Heart left ventricle (tissue), 16 donors: ENCODE measurements at regions of chr12 and their contacts with region 1.

Region 1: DNA sequence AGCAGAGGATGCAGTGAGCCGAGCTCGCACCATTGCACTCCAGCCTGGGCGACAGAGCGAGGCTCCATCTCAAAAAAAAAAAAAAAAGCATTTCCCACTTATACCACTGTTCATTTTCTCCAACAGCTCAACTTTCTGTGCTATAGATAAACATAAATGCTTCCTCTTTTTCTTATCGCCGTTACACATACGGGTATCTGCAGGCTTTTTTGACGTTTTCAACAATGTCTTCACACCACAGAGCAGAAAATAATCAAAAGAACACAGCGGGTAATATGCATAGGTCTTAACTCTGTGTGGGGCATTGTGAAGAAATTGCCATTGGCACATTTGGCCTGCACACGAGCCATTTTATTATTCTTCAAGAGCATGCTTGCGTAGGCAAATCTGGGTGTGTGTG is 86.4 kb downstream of the CAPZA3 start:
- DNase-seq: no peak
- ATAC-seq: no peak
- H3K4me3 ChIP-seq: no peak overlapping the region
- H3K27ac ChIP-seq: no peak overlapping the region
- H3K4me1 ChIP-seq: no peaks in the 10 kb centered on the region
- H3K27me3 ChIP-seq: no peaks in the 10 kb centered on the region
- CTCF ChIP-seq: no peak
- POLR2A ChIP-seq: no peak

Region 2: DNA sequence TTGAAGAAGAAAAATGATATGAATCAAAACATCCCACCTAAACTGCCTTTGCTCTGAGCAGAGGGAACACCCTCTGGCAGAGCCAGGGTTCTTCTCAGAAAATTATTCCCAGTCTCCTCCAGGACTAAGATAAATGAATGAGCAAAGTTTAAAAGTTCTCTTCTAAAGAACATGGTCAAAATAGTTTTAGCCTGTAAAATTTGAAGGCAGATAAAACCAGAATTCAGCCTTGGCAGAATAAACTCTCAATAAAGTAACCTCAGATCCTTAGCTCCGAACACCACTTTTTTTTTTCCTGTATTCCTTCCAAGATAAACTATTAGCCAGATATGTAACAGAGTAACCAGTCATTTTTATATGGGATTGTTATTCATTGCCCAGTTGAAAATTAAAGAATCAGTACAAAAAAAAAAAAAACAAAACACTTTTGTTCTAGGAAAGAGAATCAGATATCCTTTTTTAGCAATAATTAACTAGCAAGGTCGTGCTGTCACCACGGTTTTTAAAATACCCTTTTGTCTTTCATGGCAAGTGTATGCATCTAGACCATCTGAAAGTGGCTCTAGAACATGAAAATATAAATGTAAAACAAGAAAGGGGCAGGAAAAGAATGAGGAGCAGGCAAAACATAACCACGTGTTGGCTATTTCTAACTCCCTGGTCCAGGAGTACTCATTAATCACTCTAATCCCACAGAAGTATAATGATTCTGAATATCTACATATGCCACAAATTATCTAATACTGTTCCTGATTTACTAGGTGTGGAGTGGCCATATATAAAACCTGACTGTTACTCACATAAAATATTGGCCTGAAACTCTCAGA is 25.5 kb before region 1 on chr12:
- intact Hi-C with region 1: loop called in 1 of 10 experiments (anchors 1 kb)
- DNase-seq: no peak
- ATAC-seq: peak; percentile 32 to 73 (median 52)
- H3K4me3 ChIP-seq: no peak overlapping the region
- H3K27ac ChIP-seq: peak overlapping the region in 8 of 12 donors; percentile 1 to 45 (median 24)
- H3K4me1 ChIP-seq: peaks cover 0 to 14% (median 0%) of the 10 kb centered on the region in 12 donors
- H3K27me3 ChIP-seq: no peaks in the 10 kb centered on the region
- CTCF ChIP-seq: no peak
- POLR2A ChIP-seq: no peak